Cardiac septum (tissue), 1 donor: ENCODE measurements at regions of chr13 and their contacts with region 1.

Region 1: GRCh38 chr13:110509971-110510786 is 51.3 kb downstream of the RAB20 start:
- DNase-seq: no peak

Region 2: DNA sequence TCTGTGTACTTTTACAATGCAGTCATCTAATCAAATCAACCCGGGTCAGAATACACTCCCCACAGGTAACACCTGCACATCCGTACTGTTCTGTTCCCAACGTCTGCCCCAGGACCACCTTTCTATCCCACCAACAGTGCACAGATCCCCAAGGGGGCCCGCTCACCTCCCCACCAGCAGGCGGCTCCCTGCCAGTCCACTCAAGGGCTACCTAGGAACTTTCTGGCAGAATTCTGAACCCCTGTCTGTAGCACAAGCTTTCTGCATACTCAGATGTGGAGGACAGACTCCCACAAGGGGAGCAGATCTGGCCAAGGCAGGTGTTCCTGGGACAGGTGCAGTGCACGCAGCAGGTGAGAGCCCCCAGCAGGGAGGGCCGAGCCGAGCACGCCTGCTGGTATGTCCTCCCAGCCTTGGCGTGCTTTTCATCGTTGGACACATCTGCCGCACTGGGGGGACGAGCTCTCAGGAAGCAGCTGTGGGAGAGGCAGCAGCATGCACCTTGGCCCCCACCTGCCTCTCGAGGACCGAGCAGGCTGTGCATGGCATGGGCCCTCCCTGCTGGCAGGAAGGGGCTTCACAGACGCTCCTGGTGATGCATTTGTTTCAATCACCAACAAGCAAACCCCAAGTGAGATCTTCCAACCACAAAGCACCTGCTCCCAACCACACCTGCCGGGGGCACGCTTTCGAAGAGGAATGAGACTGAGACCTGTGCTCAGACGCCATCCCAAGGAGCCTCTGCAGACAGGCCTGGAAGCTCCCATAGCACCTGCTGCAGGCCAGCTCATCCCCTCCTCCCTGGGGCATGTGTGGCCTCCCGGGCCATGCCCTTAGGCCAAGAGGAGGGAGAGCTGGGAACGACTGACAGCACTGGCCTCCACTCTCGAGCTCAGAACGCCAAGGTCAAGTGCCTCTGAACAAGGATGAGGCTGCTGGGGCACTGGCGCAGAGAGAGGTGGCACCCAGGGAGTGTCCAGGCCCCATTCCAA is 15.4 kb after region 1 on chr13:
- intact Hi-C with region 1: loop called (anchors 2 kb)
- DNase-seq: no peak